Mammary epithelial cell (primary cell): ENCODE measurements at regions of chr6 and their contacts with region 1.

Region 1: GRCh38 chr6:53628354-53629119 is 37.0 kb downstream of the KLHL31 start:
- DNase-seq: peak; percentile 94
- H3K4me3 ChIP-seq: peak overlapping the region; percentile 4 to 37 (median 14)
- H3K27ac ChIP-seq: peak overlapping the region; percentile 99
- H3K4me1 ChIP-seq: peaks cover 42% of the 10 kb centered on the region
- H3K27me3 ChIP-seq: no peaks in the 10 kb centered on the region
- CTCF ChIP-seq: no peak

Region 2: DNA sequence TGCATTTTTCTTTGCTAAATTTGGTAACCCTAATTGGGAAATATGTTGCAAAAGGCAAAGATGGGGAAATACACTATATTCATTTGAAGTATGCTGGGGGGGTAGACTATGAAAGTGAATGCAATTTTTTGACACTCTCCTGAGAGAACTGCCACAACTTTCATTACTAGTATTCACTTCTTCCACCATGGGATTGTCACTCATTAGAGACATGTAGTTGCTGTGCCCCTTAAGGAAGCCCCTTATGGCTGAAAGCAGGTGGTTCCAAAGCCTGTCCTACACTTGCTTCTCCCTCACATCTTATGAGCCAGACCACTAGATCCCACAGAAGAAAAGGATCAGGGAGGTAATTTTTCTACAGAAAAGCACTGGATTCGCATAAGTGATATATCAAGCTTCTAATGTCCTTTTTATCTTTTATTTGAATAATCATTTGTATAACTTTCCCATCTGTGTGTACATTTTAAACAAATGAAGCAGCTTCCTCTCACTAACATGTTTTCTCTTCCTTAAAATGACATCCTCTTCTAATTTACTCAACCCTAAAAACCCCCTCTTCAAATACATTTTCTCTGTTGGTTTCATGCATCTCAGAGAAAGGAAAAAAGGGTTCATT is 167.4 kb before region 1 on chr6:
- CTCF ChIA-PET with region 1: no interaction called
- dilution Hi-C with region 1: no loop called
- in situ Hi-C with region 1: no loop called
- intact Hi-C with region 1: no loop called
- DNase-seq: no peak
- H3K4me3 ChIP-seq: no peak overlapping the region
- H3K27ac ChIP-seq: no peak overlapping the region
- H3K4me1 ChIP-seq: peaks cover 17% of the 10 kb centered on the region
- H3K27me3 ChIP-seq: no peaks in the 10 kb centered on the region
- CTCF ChIP-seq: no peak

Region 3: DNA sequence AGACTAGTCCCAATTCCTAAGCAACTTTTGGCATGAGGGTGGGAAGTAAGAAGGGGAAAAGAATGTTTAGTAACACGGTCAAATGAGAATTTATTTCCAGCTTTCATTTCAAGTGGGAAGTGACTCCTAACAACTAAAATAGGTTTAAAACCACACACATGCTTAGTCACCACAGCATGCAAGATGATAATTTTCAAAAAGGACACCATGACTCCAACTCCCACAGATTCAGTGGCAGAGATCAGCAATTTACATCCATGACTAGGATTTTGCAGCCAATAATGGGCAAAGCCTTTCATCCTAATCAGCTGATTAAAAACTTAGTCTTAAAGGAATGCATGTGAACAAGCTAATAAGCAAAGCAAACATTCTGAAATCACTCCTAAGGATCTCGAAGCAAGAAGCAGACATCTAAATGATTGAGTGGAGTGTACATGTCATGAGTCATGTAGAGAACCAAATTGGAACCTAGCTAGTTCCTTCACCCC is 35.5 kb before region 1 on chr6:
- CTCF ChIA-PET with region 1: no interaction called
- dilution Hi-C with region 1: no loop called
- in situ Hi-C with region 1: no loop called
- intact Hi-C with region 1: loop called (anchors 2 kb)
- DNase-seq: peak; percentile 74
- H3K4me3 ChIP-seq: no peak overlapping the region
- H3K27ac ChIP-seq: no peak overlapping the region
- H3K4me1 ChIP-seq: peaks cover 18% of the 10 kb centered on the region
- H3K27me3 ChIP-seq: no peaks in the 10 kb centered on the region
- CTCF ChIP-seq: no peak

Region 4: DNA sequence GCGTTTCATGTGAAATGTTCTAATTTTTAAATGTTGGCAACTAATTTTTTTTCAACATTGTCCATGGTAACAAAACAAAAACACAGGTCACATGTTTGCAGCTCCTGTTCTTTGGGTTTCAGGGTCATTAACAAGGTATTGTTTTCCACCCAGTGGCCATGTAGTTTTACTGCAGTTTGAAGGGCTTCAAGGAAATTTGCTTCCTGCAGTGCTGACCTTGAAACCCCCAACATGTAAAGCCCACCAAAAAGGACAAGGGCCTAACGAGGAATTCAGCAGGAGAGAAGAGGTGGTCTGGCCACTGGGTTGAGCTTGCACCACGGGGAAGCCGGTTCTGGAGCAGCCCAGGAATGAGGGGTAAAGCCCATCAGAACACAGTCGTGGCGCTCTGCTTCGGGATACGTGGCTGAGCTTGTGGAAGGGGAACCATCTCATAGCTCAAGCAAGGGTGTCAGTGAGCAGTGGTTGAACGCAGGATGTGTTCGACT is 51.0 kb after region 1 on chr6:
- CTCF ChIA-PET with region 1: no interaction called
- dilution Hi-C with region 1: no loop called
- in situ Hi-C with region 1: no loop called
- intact Hi-C with region 1: no loop called
- DNase-seq: peak; percentile 37
- H3K4me3 ChIP-seq: no peak overlapping the region
- H3K27ac ChIP-seq: peak overlapping the region; percentile 20
- H3K4me1 ChIP-seq: no peaks in the 10 kb centered on the region
- H3K27me3 ChIP-seq: no peaks in the 10 kb centered on the region
- CTCF ChIP-seq: peak; percentile 42 to 53